ENCODE measurements at regions of chr2 and their contacts with region 1.

Region 1: GRCh38 chr2:110677530-110678456 is at the start of gene BUB1:
- DNase-seq: peak; percentile 96 to 98
- ATAC-seq: peak; percentile 100
- H3K4me3 ChIP-seq: peak within 1 kb of the TSS; percentile 70
- H3K27ac ChIP-seq: peak within 1 kb of the TSS; percentile 68
- H3K4me1 ChIP-seq: peaks cover 4% of the 10 kb centered on the region
- H3K27me3 ChIP-seq: no peaks in the 10 kb centered on the region
- CTCF ChIP-seq: no peak
- total RNA-seq, gene BUB1: 0.06 to 0.69 (median 0.14) TPM

Region 2: GRCh38 chr2:110768604-110769003 is 90.8 kb after region 1 on chr2:
- intact Hi-C with region 1: loop called in 1 of 2 experiments (anchors 5 kb)
- DNase-seq: no peak
- ATAC-seq: no peak
- H3K4me3 ChIP-seq: no peak overlapping the region
- H3K27ac ChIP-seq: no peak overlapping the region
- H3K4me1 ChIP-seq: peaks cover 21% of the 10 kb centered on the region
- H3K27me3 ChIP-seq: no peaks in the 10 kb centered on the region
- CTCF ChIP-seq: no peak